ENCODE measurements at regions of chr16 and their contacts with region 1.

Region 1: GRCh38 chr16:30571695-30572600 is at the start of gene ZNF688:
- DNase-seq: peak; percentile 94 to 97
- H3K4me3 ChIP-seq: peak within 1 kb of the TSS; percentile 77
- H3K4me3 Mint-ChIP-seq: peak within 1 kb of the TSS; percentile 82
- H3K27ac Mint-ChIP-seq: peak within 1 kb of the TSS; percentile 93
- H3K4me1 ChIP-seq: no peaks in the 10 kb centered on the region
- H3K4me1 Mint-ChIP-seq: peaks cover 7% of the 10 kb centered on the region
- H3K27me3 ChIP-seq: no peaks in the 10 kb centered on the region
- H3K27me3 Mint-ChIP-seq: no peaks in the 10 kb centered on the region
- CTCF ChIP-seq: no peak
- total RNA-seq, gene ZNF688: 6.2 and 10.0 TPM in 2 replicates

Region 2: DNA sequence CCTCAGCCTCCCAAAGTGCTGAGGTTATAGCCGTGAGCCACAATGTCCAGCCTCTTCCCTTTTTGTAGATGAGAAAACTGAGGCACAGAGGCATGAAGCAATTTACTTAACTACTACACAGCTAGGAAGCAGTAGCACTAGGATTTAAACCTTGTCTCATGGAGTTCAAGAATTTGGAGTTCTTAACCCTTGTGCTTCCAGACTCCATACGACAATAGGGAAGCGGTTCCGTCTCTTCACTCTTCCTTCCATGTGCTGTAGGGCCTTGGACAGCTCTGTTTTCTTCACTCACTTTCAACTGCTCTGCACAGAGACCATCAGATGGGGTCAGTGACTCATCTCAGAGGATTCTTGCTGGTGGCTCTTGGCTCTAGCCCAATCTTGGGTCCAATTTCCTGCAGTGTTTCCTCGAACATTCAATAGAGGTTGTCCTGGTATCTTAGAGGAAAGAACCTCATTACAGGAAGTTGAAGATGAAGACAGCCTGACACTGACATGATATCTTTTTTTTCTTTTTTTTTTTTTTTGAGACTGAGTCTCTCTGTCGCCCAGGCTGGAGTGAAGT is 80.1 kb before region 1 on chr16:
- CTCF ChIA-PET with region 1: no interaction called
- POLR2A ChIA-PET with region 1: no interaction called
- intact Hi-C with region 1: no loop called
- DNase-seq: no peak
- H3K4me3 ChIP-seq: no peak overlapping the region
- H3K4me3 Mint-ChIP-seq: no peak overlapping the region
- H3K27ac Mint-ChIP-seq: no peak overlapping the region
- H3K4me1 ChIP-seq: no peaks in the 10 kb centered on the region
- H3K4me1 Mint-ChIP-seq: no peaks in the 10 kb centered on the region
- H3K27me3 ChIP-seq: no peaks in the 10 kb centered on the region
- H3K27me3 Mint-ChIP-seq: no peaks in the 10 kb centered on the region
- CTCF ChIP-seq: no peak

Region 3: DNA sequence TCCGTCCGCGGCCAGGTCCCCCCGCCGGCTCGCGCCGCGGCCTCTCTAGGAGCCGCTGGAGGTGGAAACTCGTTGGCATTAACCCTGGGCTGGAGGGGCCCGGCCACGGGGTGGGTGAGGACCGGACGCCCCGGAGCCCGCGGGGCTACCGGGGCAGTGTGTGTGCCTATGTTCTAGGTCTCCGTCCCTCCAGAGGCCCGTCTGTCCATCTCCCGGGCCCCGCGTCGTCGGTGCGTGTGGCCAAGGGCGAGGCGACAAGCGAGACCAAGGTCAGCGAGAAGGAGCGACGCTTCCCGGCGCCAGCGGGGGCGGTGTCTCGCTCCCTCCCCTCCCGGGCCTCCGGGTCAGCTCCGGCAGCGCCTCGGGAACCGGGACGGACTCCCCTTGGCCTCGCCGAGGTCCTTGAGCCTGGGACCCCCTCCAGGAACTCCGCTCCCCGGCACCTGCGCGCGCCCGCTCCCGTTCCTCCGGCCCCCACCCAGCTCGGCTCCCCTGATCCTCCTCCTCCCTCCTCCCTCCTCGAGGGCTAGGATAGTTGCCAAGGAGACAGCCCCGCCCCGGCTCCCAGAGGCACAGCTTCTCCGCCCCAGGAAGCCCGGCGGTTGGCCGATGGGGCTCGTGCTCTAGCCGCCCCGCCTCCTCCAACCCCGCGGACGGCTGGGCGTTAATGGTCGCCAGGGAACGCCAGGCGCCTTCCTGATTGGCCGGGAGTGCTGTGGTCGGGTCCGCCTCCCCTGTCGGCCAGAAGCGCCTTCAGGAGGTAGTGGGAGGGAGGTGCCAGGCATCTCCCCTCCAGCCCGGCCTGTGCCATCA is 44.9 kb before region 1 on chr16:
- CTCF ChIA-PET with region 1: no interaction called
- POLR2A ChIA-PET with region 1: no interaction called
- intact Hi-C with region 1: loop called (anchors 1 kb)
- DNase-seq: peak; percentile 97 to 98
- H3K4me3 ChIP-seq: peak overlapping the region; percentile 69
- H3K4me3 Mint-ChIP-seq: peak overlapping the region; percentile 82
- H3K27ac Mint-ChIP-seq: peak overlapping the region; percentile 75
- H3K4me1 ChIP-seq: peaks cover 25% of the 10 kb centered on the region
- H3K4me1 Mint-ChIP-seq: peaks cover 12% of the 10 kb centered on the region
- H3K27me3 ChIP-seq: no peaks in the 10 kb centered on the region
- H3K27me3 Mint-ChIP-seq: no peaks in the 10 kb centered on the region
- CTCF ChIP-seq: peak; percentile 36 to 43

Region 4: GRCh38 chr16:30546115-30546514 is 25.8 kb before region 1 on chr16:
- CTCF ChIA-PET with region 1: no interaction called
- POLR2A ChIA-PET with region 1: no interaction called
- intact Hi-C with region 1: no loop called
- DNase-seq: no peak
- H3K4me3 ChIP-seq: no peak overlapping the region
- H3K4me3 Mint-ChIP-seq: peak overlapping the region; percentile 22
- H3K27ac Mint-ChIP-seq: peak overlapping the region; percentile 58
- H3K4me1 ChIP-seq: peaks cover 45% of the 10 kb centered on the region
- H3K4me1 Mint-ChIP-seq: peaks cover 29% of the 10 kb centered on the region
- H3K27me3 ChIP-seq: no peaks in the 10 kb centered on the region
- H3K27me3 Mint-ChIP-seq: no peaks in the 10 kb centered on the region
- CTCF ChIP-seq: no peak

Region 5: GRCh38 chr16:30557957-30558788 is 13.8 kb before region 1 on chr16 and contains the start of gene ZNF764:
- CTCF ChIA-PET with region 1: interaction called, 6 read pairs
- POLR2A ChIA-PET with region 1: interaction called, 11 read pairs
- intact Hi-C with region 1: loop called (anchors 2 kb)
- DNase-seq: peak; percentile 96 to 97
- H3K4me3 ChIP-seq: peak within 1 kb of the TSS; percentile 72
- H3K4me3 Mint-ChIP-seq: peak within 1 kb of the TSS; percentile 78
- H3K27ac Mint-ChIP-seq: peak within 1 kb of the TSS; percentile 53
- H3K4me1 ChIP-seq: peaks cover 5% of the 10 kb centered on the region; the same call in 1 of the 2 replicates
- H3K4me1 Mint-ChIP-seq: peaks cover 6% of the 10 kb centered on the region
- H3K27me3 ChIP-seq: no peaks in the 10 kb centered on the region
- H3K27me3 Mint-ChIP-seq: no peaks in the 10 kb centered on the region
- CTCF ChIP-seq: no peak
- total RNA-seq, gene ZNF764: 8.5 and 10.9 TPM in 2 replicates

Region 6: DNA sequence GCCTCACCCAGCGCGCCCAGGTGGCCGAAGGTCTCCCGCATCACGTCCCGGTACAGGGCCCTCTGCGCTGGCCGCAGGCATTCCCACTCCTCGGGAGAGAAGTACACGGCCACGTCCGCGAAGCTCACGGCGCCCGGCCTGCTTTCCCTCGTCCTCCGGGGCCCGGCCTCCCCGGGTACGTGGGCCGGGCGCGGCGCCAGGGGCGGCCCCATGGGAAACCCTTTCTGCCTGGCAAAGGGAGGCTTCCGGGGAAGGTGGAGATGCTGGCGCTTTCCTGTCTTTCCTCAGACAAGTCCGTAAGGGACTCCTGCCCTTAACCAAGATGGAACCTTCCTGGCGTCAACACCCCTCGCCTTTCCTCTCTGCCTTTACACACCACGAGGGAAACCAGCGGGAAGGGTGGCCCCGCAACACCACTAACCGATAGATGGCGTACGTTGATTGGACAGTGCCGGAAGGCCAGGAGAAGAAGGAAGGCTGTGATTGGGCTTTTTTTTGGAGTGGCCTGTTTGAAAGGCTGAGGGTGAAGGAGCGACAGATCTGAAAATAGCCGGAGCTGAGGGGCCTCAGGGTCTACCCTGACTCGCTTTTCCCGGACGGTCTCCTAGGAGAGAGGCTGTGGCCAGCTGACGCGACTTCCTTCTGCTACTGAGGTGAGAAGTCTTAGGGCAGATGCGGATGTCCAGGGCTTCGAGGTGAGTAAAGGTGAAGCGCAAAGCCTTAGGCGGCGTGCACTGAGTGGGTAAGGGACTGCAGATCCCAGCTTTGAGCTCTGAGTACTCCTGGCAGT is 13.6 kb after region 1 on chr16 and contains the start of gene ZNF785:
- CTCF ChIA-PET with region 1: interaction called, 9 read pairs
- POLR2A ChIA-PET with region 1: interaction called, 19 read pairs
- intact Hi-C with region 1: loop called (anchors 1 kb)
- DNase-seq: peak; percentile 96 to 98
- H3K4me3 ChIP-seq: peak within 1 kb of the TSS; percentile 69
- H3K4me3 Mint-ChIP-seq: peak within 1 kb of the TSS; percentile 91
- H3K27ac Mint-ChIP-seq: peak within 1 kb of the TSS; percentile 91
- H3K4me1 ChIP-seq: no peaks in the 10 kb centered on the region
- H3K4me1 Mint-ChIP-seq: no peaks in the 10 kb centered on the region
- H3K27me3 ChIP-seq: no peaks in the 10 kb centered on the region
- H3K27me3 Mint-ChIP-seq: no peaks in the 10 kb centered on the region
- CTCF ChIP-seq: peak in 1 of 2 experiments; percentile 7
- total RNA-seq, gene ZNF785: 13.5 and 13.6 TPM in 2 replicates

Measured in Caco-2 (cell line).